ENCODE measurements at regions of chr20 and their contacts with region 1.

Region 1: DNA sequence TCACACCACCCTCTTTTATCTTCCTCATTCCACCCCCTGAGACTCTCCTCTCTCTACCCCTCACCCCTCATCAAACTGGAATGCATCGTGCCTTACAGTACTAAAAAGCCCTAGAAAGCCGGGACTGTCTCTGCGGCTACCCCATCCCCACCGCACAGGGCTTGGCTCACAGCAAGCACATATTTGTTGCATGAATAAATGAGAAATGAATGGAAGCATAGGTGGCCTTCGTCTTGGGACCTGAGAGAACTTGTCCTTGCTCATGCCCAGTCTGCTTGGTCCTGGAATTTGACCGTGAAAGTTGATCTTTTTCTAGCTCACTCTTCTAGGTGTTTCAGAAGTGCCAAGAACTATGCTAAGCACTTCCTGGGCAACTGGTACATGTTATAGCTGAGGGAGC is 53.3 kb downstream of the APCDD1L start:
- DNase-seq: no peak
- ATAC-seq: no peak

Region 2: GRCh38 chr20:57480444-57481160 is 981.3 kb before region 1 on chr20:
- intact Hi-C with region 1: loop called (anchors 5 kb)
- DNase-seq: peak; percentile 26
- ATAC-seq: no peak

Region 3: GRCh38 chr20:57866221-57867106 is 595.4 kb before region 1 on chr20:
- intact Hi-C with region 1: no loop called
- DNase-seq: no peak
- ATAC-seq: no peak

Region 4: GRCh38 chr20:58508756-58509395 is 47.0 kb after region 1 on chr20:
- intact Hi-C with region 1: loop called (anchors 1 kb)
- DNase-seq: no peak
- ATAC-seq: no peak

Region 5: GRCh38 chr20:58584881-58585752 is 123.2 kb after region 1 on chr20:
- intact Hi-C with region 1: no loop called
- DNase-seq: peak; percentile 27
- ATAC-seq: no peak

Region 6: GRCh38 chr20:58669287-58670006 is 207.5 kb after region 1 on chr20:
- intact Hi-C with region 1: no loop called
- DNase-seq: no peak
- ATAC-seq: no peak